SK-N-SH (cell line): ENCODE measurements at regions of chr3 and their contacts with region 1.

Region 1: DNA sequence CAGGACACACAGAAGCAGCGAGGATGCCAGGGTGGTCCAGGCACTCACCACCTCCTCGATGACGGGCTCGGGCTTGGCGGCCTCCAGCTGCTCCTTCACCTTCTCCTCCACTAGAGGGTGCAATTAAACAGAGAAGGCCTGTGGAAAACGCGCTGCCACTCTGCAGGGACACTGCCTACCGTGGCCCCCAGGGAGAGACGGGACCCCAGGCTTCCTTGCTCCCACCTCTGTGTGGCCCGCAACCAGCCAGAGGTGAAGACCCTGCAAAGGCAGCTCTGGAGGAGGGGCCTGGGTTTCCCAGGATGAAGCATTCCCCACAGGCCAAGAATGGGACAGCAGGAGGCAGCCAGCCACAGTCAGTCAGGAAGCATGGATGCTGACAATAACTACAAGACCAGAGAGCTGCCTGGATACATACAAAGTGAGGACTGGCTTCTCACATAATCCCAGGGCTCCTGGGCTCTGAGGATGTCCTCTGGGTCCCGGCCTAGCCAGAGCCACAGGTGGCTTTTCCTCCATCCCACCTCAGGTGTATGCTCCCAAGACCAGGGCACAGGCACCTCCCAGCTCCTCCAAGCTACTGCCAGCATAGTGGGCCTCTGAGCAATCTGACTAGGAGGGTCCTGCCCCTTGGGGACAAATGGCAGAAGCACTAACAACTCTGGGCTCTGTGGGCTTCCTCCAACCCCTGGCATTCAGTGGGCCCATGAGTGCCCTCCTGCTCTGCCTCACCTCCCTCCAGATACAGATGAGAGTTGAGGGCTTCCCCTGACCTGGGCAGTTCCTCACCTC is 46.2 kb downstream of the PTH1R start:
- DNase-seq: peak; percentile 79
- H3K4me3 ChIP-seq: peak overlapping the region in 1 of 2 experiments; percentile 35; a peak in 1 of 4 replicates
- H3K27ac ChIP-seq: no peak overlapping the region
- H3K4me1 ChIP-seq: no peaks in the 10 kb centered on the region
- H3K27me3 ChIP-seq: no peaks in the 10 kb centered on the region
- CTCF ChIP-seq: peak; percentile 81
- EP300 ChIP-seq: no peak
- RAD21 ChIP-seq: peak; percentile 81

Region 2: GRCh38 chr3:46947981-46948791 is 24.4 kb after region 1 on chr3:
- CTCF ChIA-PET with region 1: interaction called, 11 read pairs
- POLR2A ChIA-PET with region 1: no interaction called
- DNase-seq: peak; percentile 53
- H3K4me3 ChIP-seq: no peak overlapping the region
- H3K27ac ChIP-seq: peak overlapping the region; percentile 71 to 87
- H3K4me1 ChIP-seq: peaks cover 25 to 47% of the 10 kb centered on the region in 2 experiments
- H3K27me3 ChIP-seq: no peaks in the 10 kb centered on the region
- CTCF ChIP-seq: no peak
- EP300 ChIP-seq: no peak
- RAD21 ChIP-seq: no peak

Region 3: DNA sequence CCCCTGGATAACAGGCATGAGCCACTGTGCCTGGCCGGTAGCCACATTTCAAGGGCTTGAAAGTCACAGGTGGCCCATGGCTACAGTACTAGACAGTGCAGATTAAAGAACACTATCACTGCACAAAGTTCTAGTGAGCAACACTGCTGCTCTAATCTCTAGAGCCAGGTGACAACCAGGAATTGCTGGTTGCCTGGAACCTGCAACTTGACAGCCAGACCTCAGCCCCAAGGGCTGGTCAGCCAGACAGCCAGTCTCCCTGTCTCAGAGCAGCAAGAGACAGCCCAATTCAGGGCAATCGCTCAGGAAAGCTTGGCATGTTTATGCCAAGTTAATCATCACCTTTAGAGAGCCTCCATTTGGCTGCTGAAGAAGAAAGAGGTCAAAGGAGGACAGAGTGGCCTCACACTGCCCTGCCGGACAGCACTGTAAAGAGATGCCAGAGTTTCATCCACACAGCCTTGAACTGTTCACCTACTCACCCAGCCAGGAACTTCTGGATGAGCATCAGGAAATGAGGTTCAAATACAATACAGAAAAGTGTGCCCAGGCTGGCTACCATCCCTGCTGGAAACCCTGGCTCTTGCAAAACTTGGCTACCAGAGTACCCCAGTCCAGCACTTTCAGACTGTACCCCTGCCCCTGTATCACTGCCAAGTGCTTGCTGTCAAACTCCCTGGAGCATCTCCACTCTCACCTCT is 46.8 kb after region 1 on chr3:
- CTCF ChIA-PET with region 1: interaction called, 13 read pairs
- POLR2A ChIA-PET with region 1: no interaction called
- DNase-seq: no peak
- H3K4me3 ChIP-seq: no peak overlapping the region
- H3K27ac ChIP-seq: peak overlapping the region in 1 of 2 experiments; percentile 75; a peak in 2 of 4 replicates
- H3K4me1 ChIP-seq: peaks cover 0 to 42% of the 10 kb centered on the region in 2 experiments; a peak in 1 of 4 replicates
- H3K27me3 ChIP-seq: no peaks in the 10 kb centered on the region
- CTCF ChIP-seq: no peak
- EP300 ChIP-seq: no peak
- RAD21 ChIP-seq: no peak

Region 4: DNA sequence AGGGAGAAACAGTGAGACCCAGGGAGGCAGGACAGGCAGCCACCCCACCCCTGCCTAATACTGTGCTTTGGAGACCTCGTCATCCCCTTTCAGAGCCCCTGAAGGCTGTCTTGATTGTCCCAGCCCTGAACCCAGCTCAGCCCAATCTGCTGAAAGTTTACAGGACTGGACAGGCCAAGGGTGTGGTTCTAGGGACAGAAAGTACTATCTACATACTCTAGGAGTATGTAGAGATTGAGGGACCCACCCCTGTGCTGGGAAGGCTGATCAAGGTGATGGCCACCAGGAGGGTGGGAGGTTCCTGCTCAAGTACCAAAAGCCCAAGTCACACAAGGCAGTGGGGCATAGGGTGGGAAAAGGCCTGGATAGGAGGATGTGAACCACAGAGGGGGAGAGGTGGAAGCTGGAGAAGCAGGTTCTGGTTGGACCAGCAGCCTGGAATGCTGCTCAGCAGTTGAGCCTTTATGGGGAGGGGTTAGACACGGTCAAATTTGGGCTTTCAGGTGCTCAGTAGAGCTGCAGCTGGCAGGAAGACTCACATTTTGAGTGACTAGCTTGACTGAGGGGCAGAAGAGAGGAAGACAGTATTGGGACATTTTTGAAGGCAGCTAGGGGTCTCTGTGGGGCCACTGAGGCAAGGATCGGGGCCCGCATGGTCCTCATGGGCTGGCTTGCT is 62.4 kb after region 1 on chr3:
- CTCF ChIA-PET with region 1: interaction called, 29 read pairs
- POLR2A ChIA-PET with region 1: no interaction called
- DNase-seq: no peak
- H3K4me3 ChIP-seq: no peak overlapping the region
- H3K27ac ChIP-seq: no peak overlapping the region
- H3K4me1 ChIP-seq: no peaks in the 10 kb centered on the region; a peak in 1 of 4 replicates
- H3K27me3 ChIP-seq: no peaks in the 10 kb centered on the region
- CTCF ChIP-seq: no peak
- EP300 ChIP-seq: no peak
- RAD21 ChIP-seq: no peak

Region 5: GRCh38 chr3:47005212-47006144 is 81.7 kb after region 1 on chr3:
- CTCF ChIA-PET with region 1: interaction called, 16 read pairs
- POLR2A ChIA-PET with region 1: interaction called, 3 read pairs
- DNase-seq: peak; percentile 26
- H3K4me3 ChIP-seq: no peak overlapping the region
- H3K27ac ChIP-seq: no peak overlapping the region
- H3K4me1 ChIP-seq: peaks cover 0 to 15% of the 10 kb centered on the region in 2 experiments; a peak in 1 of 4 replicates
- H3K27me3 ChIP-seq: no peaks in the 10 kb centered on the region
- CTCF ChIP-seq: no peak
- EP300 ChIP-seq: no peak
- RAD21 ChIP-seq: no peak